CD8-positive, alpha-beta T cell (primary cell): ENCODE measurements at regions of chr2 and their contacts with region 1.

Region 1: DNA sequence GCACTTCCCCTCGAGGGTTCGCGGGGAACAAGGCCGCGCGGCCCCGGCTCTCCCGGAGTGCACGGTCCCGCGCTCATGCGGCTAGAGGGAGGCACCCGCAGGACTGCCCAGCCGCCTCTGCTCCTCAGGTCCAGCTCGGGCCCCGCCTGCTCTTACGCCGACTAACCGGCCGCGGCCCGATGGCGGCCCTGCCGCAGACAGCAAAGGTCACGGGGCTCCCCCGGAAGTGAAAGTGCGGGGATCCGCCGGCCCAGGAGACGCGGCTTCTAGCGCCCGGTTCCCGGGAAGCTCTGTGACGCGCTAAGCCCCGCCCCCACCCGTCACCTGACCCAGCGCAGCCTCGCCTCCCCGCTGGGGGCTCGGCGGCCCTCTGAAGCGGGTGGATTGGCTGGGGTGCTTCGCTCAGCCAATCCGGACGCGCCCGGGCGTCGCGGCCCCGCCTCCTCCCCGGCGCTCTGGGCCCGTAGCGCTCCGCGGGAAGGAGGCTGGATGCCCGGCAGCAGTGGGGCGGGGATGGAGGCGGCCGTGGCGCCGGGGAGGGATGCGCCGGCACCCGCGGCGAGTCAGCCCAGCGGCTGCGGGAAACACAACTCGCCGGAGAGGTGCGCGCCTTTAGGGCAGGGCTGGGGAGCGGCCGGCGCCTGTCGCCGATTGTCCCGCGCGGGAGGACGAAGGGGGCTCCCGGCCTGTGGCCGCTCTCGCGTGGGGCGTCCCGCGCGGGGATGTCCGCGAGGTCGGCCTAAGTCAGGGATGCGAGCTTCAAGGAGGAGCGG is at the start of gene SCLY:
- DNase-seq: peak; percentile 90 to 99 (median 96)
- ATAC-seq: peak; percentile 97
- H3K4me3 ChIP-seq: peak within 1 kb of the TSS; percentile 77 to 88
- H3K4me3 Mint-ChIP-seq: peak within 1 kb of the TSS; percentile 81
- H3K27ac ChIP-seq: peak within 1 kb of the TSS; percentile 81 to 83
- H3K27ac Mint-ChIP-seq: peak within 1 kb of the TSS; percentile 89
- H3K4me1 ChIP-seq: peaks cover 16% of the 10 kb centered on the region
- H3K4me1 Mint-ChIP-seq: peaks cover 39% of the 10 kb centered on the region
- H3K27me3 ChIP-seq: no peaks in the 10 kb centered on the region
- H3K27me3 Mint-ChIP-seq: peaks cover 3% of the 10 kb centered on the region
- CTCF ChIP-seq: no peak
- total RNA-seq, gene SCLY: 5.8 to 11.8 TPM

Region 2: GRCh38 chr2:237085248-237086221 is 975.2 kb before region 1 on chr2 and contains the start of gene COPS8:
- CTCF ChIA-PET with region 1: no interaction called
- POLR2A ChIA-PET with region 1: no interaction called
- intact Hi-C with region 1: loop called in 1 of 2 experiments (anchors 10 kb)
- DNase-seq: peak; percentile 80 to 94 (median 90)
- ATAC-seq: peak; percentile 98
- H3K4me3 ChIP-seq: peak within 1 kb of the TSS; percentile 78 to 80
- H3K4me3 Mint-ChIP-seq: peak within 1 kb of the TSS; percentile 100
- H3K27ac ChIP-seq: peak within 1 kb of the TSS; percentile 88 to 91
- H3K27ac Mint-ChIP-seq: peak within 1 kb of the TSS; percentile 100
- H3K4me1 ChIP-seq: peaks cover 23% of the 10 kb centered on the region
- H3K4me1 Mint-ChIP-seq: peaks cover 39% of the 10 kb centered on the region
- H3K27me3 ChIP-seq: no peaks in the 10 kb centered on the region
- H3K27me3 Mint-ChIP-seq: no peaks in the 10 kb centered on the region
- CTCF ChIP-seq: peak; percentile 40
- total RNA-seq, gene COPS8: 53.2 to 56.3 TPM

Region 3: GRCh38 chr2:237935740-237936452 is 124.8 kb before region 1 on chr2:
- CTCF ChIA-PET with region 1: no interaction called
- POLR2A ChIA-PET with region 1: no interaction called
- intact Hi-C with region 1: no loop called
- DNase-seq: no peak
- ATAC-seq: no peak
- H3K4me3 ChIP-seq: no peak overlapping the region
- H3K4me3 Mint-ChIP-seq: no peak overlapping the region
- H3K27ac ChIP-seq: no peak overlapping the region
- H3K27ac Mint-ChIP-seq: no peak overlapping the region
- H3K4me1 ChIP-seq: peaks cover 5% of the 10 kb centered on the region
- H3K4me1 Mint-ChIP-seq: peaks cover 11% of the 10 kb centered on the region
- H3K27me3 ChIP-seq: no peaks in the 10 kb centered on the region
- H3K27me3 Mint-ChIP-seq: peaks cover 2% of the 10 kb centered on the region
- CTCF ChIP-seq: no peak

Region 4: GRCh38 chr2:238203094-238203972 is 142.6 kb after region 1 on chr2 and contains the start of gene ILKAP:
- CTCF ChIA-PET with region 1: no interaction called
- POLR2A ChIA-PET with region 1: no interaction called
- intact Hi-C with region 1: loop called (anchors 1 kb)
- DNase-seq: peak; percentile 78 to 94 (median 90)
- ATAC-seq: peak; percentile 97
- H3K4me3 ChIP-seq: peak within 1 kb of the TSS; percentile 65 to 71
- H3K4me3 Mint-ChIP-seq: peak within 1 kb of the TSS; percentile 89
- H3K27ac ChIP-seq: peak within 1 kb of the TSS; percentile 71 to 84
- H3K27ac Mint-ChIP-seq: peak within 1 kb of the TSS; percentile 92
- H3K4me1 ChIP-seq: peaks cover 43% of the 10 kb centered on the region
- H3K4me1 Mint-ChIP-seq: peaks cover 46% of the 10 kb centered on the region
- H3K27me3 ChIP-seq: no peaks in the 10 kb centered on the region
- H3K27me3 Mint-ChIP-seq: peaks cover 2% of the 10 kb centered on the region
- CTCF ChIP-seq: no peak
- total RNA-seq, gene ILKAP: 133 to 144 TPM

Region 5: DNA sequence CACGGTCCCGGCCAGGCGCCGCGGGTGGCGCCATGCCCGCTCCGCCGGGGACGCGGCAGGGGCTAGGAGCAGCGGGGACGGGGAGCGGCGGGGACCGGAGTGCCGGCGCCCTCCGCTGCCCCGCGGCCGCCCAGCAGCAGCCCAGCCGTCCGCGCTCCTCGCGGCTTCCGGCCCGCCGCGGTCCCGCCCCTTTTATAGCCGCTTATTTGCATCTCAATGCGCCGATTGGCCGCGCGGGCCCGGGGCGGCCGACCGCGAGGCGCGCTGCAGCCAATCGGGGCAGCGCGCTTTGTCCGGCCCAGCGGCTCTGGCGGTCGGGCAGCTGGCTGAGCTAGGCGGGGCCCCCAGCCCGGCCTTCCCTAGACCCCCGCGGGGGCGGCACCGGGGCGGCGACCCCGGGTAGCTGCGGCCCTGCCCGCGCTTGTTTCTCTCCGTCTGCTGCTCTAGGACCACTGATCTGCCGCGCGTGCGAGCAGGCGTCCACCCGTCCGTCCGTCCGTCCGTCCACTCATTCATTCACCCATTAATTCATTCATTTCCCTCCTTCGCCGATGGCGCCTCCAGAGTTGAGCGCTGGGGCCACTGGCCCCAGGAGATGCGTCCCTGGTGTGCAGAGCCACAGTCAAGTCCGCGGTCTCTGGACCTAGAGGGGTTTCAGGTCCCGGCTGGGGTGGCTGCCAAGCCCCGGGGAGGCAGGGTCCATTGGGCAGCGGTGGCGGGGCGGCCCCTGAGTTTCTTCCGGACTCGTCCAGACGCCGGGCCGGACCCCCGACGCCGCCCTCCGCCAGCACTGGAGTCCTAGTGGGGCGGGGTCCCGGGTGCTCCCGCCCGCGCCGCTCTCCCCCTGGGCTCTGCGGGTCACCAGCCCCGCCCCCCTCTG is 179.4 kb after region 1 on chr2 and contains the start of gene HES6:
- CTCF ChIA-PET with region 1: interaction called, 3 read pairs
- POLR2A ChIA-PET with region 1: no interaction called
- intact Hi-C with region 1: loop called in 1 of 2 experiments (anchors 10 kb)
- DNase-seq: peak; percentile 27 to 88 (median 73)
- ATAC-seq: peak; percentile 74
- H3K4me3 ChIP-seq: peak within 1 kb of the TSS; percentile 51 to 69
- H3K4me3 Mint-ChIP-seq: peak within 1 kb of the TSS; percentile 91
- H3K27ac ChIP-seq: no peak within 1 kb of the TSS
- H3K27ac Mint-ChIP-seq: no peak within 1 kb of the TSS
- H3K4me1 ChIP-seq: peaks cover 11% of the 10 kb centered on the region
- H3K4me1 Mint-ChIP-seq: peaks cover 6% of the 10 kb centered on the region
- H3K27me3 ChIP-seq: peaks cover 0 to 6% of the 10 kb centered on the region in 2 experiments
- H3K27me3 Mint-ChIP-seq: peaks cover 22% of the 10 kb centered on the region
- CTCF ChIP-seq: no peak
- total RNA-seq, gene HES6: 0.98 to 1.5 TPM

Region 6: GRCh38 chr2:238426568-238427434 is 366.1 kb after region 1 on chr2 and contains the start of gene ASB1:
- CTCF ChIA-PET with region 1: no interaction called
- POLR2A ChIA-PET with region 1: no interaction called
- intact Hi-C with region 1: loop called in 1 of 2 experiments (anchors 2 kb)
- DNase-seq: peak; percentile 62 to 94 (median 83)
- ATAC-seq: peak; percentile 78
- H3K4me3 ChIP-seq: peak within 1 kb of the TSS; percentile 66 to 79
- H3K4me3 Mint-ChIP-seq: peak within 1 kb of the TSS; percentile 92
- H3K27ac ChIP-seq: peak within 1 kb of the TSS; percentile 78 to 87
- H3K27ac Mint-ChIP-seq: peak within 1 kb of the TSS; percentile 97
- H3K4me1 ChIP-seq: peaks cover 37% of the 10 kb centered on the region
- H3K4me1 Mint-ChIP-seq: peaks cover 49% of the 10 kb centered on the region
- H3K27me3 ChIP-seq: no peaks in the 10 kb centered on the region
- H3K27me3 Mint-ChIP-seq: no peaks in the 10 kb centered on the region
- CTCF ChIP-seq: no peak
- total RNA-seq, gene ASB1: 16.3 to 25.3 TPM